ENCODE measurements at regions of chr11 and their contacts with region 1.

Region 1: DNA sequence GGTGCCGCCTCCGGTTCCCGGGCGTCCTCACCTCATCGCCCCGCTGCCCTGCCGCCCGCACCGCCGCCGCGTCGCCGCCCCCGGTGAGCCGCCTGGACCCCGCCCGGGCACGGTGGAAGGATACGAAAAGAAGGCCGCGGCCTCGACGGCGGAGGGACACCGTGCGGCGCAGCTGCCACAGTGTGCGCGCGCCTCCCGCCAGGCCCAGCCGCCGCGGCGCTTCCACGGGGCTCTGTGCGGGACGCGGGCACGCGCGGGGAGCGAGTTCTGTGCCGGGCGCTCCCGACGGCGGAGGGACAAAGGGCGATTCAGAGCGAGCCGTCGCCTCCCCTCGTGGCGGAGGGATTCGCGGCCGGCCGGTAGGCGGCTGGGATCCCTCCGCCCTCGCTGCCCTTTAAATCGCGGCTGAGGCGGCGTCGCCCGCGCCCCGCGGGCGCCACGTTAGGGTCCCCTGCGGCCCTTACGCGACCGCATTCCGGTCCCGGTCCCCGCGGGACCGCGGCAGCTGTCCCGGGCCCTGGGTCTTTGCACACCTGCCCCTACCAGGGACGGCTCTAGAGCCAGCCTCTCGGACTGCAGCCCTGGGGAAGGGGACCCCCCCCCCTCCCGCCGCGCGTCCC is 569 bp upstream of the KMT5B start:
- DNase-seq: peak; percentile 92 to 94 (median 94)
- ATAC-seq: peak; percentile 18 to 70 (median 63)
- H3K4me3 ChIP-seq: peak overlapping the region; percentile 71 to 96 (median 84)
- H3K27ac ChIP-seq: peak overlapping the region; percentile 95 to 100 (median 99)
- H3K4me1 ChIP-seq: peaks cover 0 to 57% (median 45%) of the 10 kb centered on the region in 12 donors
- H3K27me3 ChIP-seq: no peaks in the 10 kb centered on the region
- CTCF ChIP-seq: peak in 2 of 12 donors; percentile 8 to 15
- POLR2A ChIP-seq: peak; percentile 88 to 96

Region 2: DNA sequence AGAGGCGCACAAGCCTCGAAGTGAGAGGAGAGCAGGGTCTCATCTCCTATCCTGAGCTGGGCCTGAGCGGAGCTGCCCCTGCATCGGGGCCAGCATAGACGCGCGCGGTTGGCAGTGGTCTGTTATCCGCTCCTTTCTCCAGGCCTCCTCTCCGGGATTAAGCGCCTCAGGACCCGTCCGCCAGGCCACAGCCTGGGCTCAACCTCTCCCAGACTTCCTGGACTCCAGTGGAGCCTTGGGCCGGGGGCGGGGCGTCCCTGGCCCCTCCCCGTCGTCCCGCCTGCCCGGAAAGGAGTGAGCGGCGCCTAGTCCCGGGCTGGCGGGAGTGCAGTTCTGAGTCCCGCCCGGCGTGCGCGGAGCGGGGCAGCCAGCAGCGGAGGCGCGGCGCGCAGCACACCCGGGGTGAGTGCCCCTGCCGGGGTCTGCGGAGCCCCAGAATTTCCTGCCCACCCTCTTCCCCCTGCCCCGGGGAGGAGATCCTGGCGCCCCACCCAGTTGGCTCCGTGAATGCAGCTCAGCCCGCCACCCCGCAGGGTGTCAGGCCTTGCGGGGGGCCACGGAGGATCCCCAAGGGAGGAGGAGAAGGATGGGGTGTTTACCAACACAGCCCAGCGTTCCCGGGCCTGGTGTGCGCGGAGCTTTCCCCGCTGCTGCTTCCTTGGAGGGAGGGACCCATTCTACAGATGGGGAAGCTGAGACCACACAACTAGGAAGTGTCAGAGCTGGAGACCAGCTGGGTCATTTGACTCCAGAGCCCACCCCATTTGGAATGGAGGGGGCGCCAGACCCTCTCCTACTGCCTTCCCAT is 174.7 kb before region 1 on chr11 and contains the start of gene TCIRG1:
- intact Hi-C with region 1: loop called in 4 of 10 experiments (anchors 5 to 10 kb)
- DNase-seq: peak; percentile 88 to 94 (median 91)
- ATAC-seq: peak; percentile 67 to 88 (median 82)
- H3K4me3 ChIP-seq: peak within 1 kb of the TSS; percentile 52 to 95 (median 81)
- H3K27ac ChIP-seq: peak within 1 kb of the TSS; percentile 74 to 96 (median 90)
- H3K4me1 ChIP-seq: peaks cover 11 to 58% (median 41%) of the 10 kb centered on the region in 12 donors
- H3K27me3 ChIP-seq: no peaks in the 10 kb centered on the region
- CTCF ChIP-seq: no peak
- POLR2A ChIP-seq: peak; percentile 73 to 98
- total RNA-seq, gene TCIRG1: 10.2 to 88.7 (median 20.3) TPM

Region 3: GRCh38 chr11:68271781-68272608 is 58.3 kb after region 1 on chr11 and contains the start of gene C11orf24:
- intact Hi-C with region 1: loop called in 1 of 10 experiments (anchors 5 kb)
- DNase-seq: peak; percentile 96 to 99 (median 96)
- ATAC-seq: peak; percentile 94 to 98 (median 97)
- H3K4me3 ChIP-seq: peak within 1 kb of the TSS; percentile 52 to 95 (median 82)
- H3K27ac ChIP-seq: peak within 1 kb of the TSS; percentile 85 to 99 (median 96)
- H3K4me1 ChIP-seq: peaks cover 8 to 43% (median 31%) of the 10 kb centered on the region in 12 donors
- H3K27me3 ChIP-seq: no peaks in the 10 kb centered on the region
- CTCF ChIP-seq: no peak
- POLR2A ChIP-seq: peak in 1 of 2 donors; percentile 88
- total RNA-seq, gene C11orf24: 17.6 to 47.1 (median 31.6) TPM

Region 4: GRCh38 chr11:68383976-68384501 is 170.4 kb after region 1 on chr11:
- intact Hi-C with region 1: loop called in 1 of 10 experiments (anchors 5 kb)
- DNase-seq: peak in 4 of 5 donors; percentile 62 to 75 (median 70)
- ATAC-seq: peak in 3 of 4 donors; percentile 9 to 30 (median 23)
- H3K4me3 ChIP-seq: no peak overlapping the region
- H3K27ac ChIP-seq: peak overlapping the region in 4 of 12 donors; percentile 15 to 84 (median 74)
- H3K4me1 ChIP-seq: peaks cover 8 to 53% (median 46%) of the 10 kb centered on the region in 12 donors
- H3K27me3 ChIP-seq: no peaks in the 10 kb centered on the region
- CTCF ChIP-seq: peak; percentile 84 to 95 (median 93)
- POLR2A ChIP-seq: no peak

Region 5: DNA sequence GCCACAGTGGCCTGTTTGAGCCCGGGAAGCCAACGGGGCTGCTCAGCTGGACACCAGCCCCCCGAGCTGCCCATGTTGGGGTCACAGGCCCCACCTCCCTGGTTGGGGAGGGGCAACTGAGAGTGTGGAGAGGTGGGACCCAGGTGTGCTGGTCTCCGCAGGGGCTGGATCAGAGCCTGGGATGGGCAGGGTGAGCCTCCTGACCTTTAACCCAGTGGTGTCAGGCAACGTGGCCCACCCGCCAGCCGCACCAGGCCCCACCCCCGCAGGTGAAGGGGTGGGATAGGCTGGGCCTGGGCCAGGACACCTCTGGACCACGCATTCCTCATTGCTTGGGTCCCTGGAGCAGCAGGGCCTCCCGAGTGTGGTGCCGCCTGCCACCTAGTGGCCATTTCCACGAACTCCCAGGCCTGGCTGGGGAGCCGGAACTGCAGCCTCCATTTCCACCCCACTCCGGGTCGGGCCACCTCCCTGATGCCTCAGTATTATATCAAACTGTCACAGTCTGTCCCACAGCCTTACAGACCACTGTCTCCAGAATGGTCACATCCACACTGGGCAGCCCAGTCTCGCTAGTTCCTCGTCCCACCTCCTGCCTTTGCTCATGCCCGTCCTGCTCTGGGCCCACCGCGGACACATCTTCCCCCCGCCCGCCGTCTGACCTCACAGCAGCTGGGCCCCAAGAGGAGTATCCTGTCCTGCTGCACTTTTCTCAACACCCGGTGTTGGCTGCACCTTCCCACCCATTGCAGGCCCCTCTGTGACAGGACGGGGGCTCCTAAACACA is 233.5 kb after region 1 on chr11:
- intact Hi-C with region 1: loop called in 4 of 10 experiments (anchors 2 to 5 kb)
- DNase-seq: peak; percentile 75 to 89 (median 79)
- ATAC-seq: peak; percentile 65 to 93 (median 90)
- H3K4me3 ChIP-seq: no peak overlapping the region
- H3K27ac ChIP-seq: peak overlapping the region in 2 of 12 donors; percentile 19 to 38
- H3K4me1 ChIP-seq: peaks cover 0 to 11% (median 1%) of the 10 kb centered on the region in 12 donors
- H3K27me3 ChIP-seq: no peaks in the 10 kb centered on the region
- CTCF ChIP-seq: peak; percentile 90 to 98 (median 96)
- POLR2A ChIP-seq: no peak

Measured in heart left ventricle (tissue), 16 donors.